MCF 10A (cell line): ENCODE measurements at regions of chr3 and their contacts with region 1.

Region 1: GRCh38 chr3:81581966-81582599 is 179.4 kb downstream of the GBE1 start:
- DNase-seq: peak; percentile 55
- H3K4me3 Mint-ChIP-seq: no peak overlapping the region
- H3K27ac Mint-ChIP-seq: no peak overlapping the region
- H3K4me1 Mint-ChIP-seq: peaks cover 6% of the 10 kb centered on the region
- H3K27me3 Mint-ChIP-seq: no peaks in the 10 kb centered on the region
- CTCF ChIP-seq: peak; percentile 58

Region 2: DNA sequence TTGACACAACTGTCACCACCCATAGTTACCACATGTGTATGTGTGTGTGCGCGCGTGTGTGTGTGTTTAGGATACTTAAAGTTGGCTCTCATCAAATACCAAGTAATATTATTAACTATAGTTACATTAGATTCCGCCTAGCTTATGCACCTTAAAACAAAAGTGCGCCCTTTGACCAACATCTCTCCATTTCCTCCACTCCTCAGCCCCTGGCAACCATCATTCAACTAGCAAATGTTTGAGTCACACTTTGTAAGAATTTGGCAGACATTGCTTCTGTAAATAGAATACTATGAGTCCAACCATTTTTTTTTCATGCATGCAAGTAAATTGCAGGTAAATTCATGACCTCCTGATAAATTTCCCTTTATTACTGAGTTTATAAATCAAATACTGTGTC is 10.0 kb after region 1 on chr3:
- CTCF ChIA-PET with region 1: interaction called, 11 read pairs
- POLR2A ChIA-PET with region 1: interaction called, 3 read pairs
- intact Hi-C with region 1: no loop called
- DNase-seq: peak; percentile 14
- H3K4me3 Mint-ChIP-seq: no peak overlapping the region
- H3K27ac Mint-ChIP-seq: no peak overlapping the region
- H3K4me1 Mint-ChIP-seq: peaks cover 7% of the 10 kb centered on the region
- H3K27me3 Mint-ChIP-seq: no peaks in the 10 kb centered on the region
- CTCF ChIP-seq: no peak

Region 3: GRCh38 chr3:81602781-81603180 is 20.7 kb after region 1 on chr3:
- CTCF ChIA-PET with region 1: interaction called, 12 read pairs
- POLR2A ChIA-PET with region 1: no interaction called
- intact Hi-C with region 1: no loop called
- DNase-seq: no peak
- H3K4me3 Mint-ChIP-seq: no peak overlapping the region
- H3K27ac Mint-ChIP-seq: peak overlapping the region; percentile 37
- H3K4me1 Mint-ChIP-seq: peaks cover 8% of the 10 kb centered on the region
- H3K27me3 Mint-ChIP-seq: no peaks in the 10 kb centered on the region
- CTCF ChIP-seq: no peak